ENCODE measurements at regions of chr4 and their contacts with region 1.

Region 1: GRCh38 chr4:64158648-64159326 is 250.5 kb downstream of the TECRL start:
- DNase-seq: peak; percentile 73 to 80
- H3K4me3 ChIP-seq: no peak overlapping the region
- H3K4me1 ChIP-seq: peaks cover 12% of the 10 kb centered on the region
- H3K27me3 ChIP-seq: no peaks in the 10 kb centered on the region

Region 2: GRCh38 chr4:63589796-63590195 is 569.0 kb before region 1 on chr4:
- in situ Hi-C with region 1: no loop called
- DNase-seq: no peak
- H3K4me3 ChIP-seq: no peak overlapping the region
- H3K4me1 ChIP-seq: no peaks in the 10 kb centered on the region
- H3K27me3 ChIP-seq: no peaks in the 10 kb centered on the region

Region 3: DNA sequence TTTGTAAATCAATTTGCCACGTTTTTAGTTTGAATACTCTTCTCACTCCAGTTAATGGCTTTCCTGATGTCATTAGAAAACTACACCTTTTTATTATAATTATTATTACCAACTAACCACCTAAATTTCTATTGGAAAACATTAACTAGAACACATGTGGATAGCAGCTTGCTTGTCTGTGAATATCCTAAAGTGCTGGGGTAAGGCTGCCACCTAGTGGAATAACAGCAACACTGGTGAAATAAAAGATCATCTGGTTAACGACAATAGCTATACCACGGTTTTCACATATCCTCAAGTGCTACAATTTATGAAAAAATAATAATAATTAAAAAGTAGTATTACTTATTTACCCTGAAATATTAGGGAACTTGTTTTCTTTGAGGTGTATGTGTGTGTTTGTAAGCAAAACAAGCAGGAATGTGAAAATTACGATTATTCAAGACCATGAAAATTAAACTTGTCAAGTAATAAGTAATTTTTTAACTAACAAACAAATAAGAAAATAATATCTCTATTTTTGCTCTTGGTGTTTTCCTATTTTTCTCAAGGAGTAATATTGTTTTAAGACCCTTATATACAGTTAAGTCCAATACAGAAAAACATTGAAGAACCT is 380.6 kb after region 1 on chr4:
- in situ Hi-C with region 1: loop called (anchors 25 kb)
- DNase-seq: peak; percentile 58 to 77
- H3K4me3 ChIP-seq: no peak overlapping the region
- H3K4me1 ChIP-seq: peaks cover 10% of the 10 kb centered on the region
- H3K27me3 ChIP-seq: no peaks in the 10 kb centered on the region